Calu3 (cell line): ENCODE measurements at regions of chr6 and their contacts with region 1.

Region 1: GRCh38 chr6:75208298-75209183 is 2.7 kb upstream of the COL12A1 start:
- DNase-seq: peak; percentile 85
- H3K4me3 Mint-ChIP-seq: peak overlapping the region; percentile 14
- H3K27ac Mint-ChIP-seq: no peak overlapping the region
- H3K4me1 Mint-ChIP-seq: peaks cover 37% of the 10 kb centered on the region
- H3K27me3 Mint-ChIP-seq: peaks cover 32% of the 10 kb centered on the region
- CTCF ChIP-seq: peak; percentile 78

Region 2: DNA sequence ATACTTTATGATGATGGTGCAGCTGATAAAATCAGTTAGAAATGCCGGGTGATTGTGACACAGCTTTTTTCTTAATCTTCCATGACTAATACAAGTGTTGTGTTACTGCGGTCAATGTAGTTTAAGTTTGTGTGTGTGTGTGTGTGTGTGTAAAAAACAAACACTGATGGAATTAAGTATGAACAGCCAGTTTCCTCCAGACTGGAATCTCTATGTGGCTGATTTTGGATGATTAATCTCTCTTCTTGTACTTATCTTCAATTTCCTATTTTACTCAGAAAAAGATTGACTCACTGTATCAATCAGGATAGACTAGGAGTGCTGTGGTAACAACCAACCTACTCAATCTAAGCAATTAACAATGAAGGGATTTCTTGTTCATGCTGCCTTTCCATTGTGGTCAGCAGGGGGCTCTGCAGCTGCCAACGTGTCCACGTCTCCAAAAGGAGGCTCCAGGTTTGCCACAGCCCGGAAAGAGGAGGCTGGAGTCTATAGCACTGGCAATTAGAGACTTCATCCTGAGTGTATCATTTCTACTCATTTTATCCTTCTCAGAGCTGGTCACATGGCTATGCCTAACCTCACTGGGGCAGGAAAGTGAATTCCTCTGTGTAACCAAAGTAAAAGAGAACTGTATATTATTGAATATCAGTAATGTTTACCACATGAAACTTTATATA is 1404.8 kb before region 1 on chr6:
- CTCF ChIA-PET with region 1: interaction called, 3 read pairs
- intact Hi-C with region 1: loop called (anchors 5 kb)
- DNase-seq: peak; percentile 67
- H3K4me3 Mint-ChIP-seq: no peak overlapping the region
- H3K27ac Mint-ChIP-seq: peak overlapping the region; percentile 44
- H3K4me1 Mint-ChIP-seq: peaks cover 14% of the 10 kb centered on the region
- H3K27me3 Mint-ChIP-seq: no peaks in the 10 kb centered on the region
- CTCF ChIP-seq: peak; percentile 56

Region 3: DNA sequence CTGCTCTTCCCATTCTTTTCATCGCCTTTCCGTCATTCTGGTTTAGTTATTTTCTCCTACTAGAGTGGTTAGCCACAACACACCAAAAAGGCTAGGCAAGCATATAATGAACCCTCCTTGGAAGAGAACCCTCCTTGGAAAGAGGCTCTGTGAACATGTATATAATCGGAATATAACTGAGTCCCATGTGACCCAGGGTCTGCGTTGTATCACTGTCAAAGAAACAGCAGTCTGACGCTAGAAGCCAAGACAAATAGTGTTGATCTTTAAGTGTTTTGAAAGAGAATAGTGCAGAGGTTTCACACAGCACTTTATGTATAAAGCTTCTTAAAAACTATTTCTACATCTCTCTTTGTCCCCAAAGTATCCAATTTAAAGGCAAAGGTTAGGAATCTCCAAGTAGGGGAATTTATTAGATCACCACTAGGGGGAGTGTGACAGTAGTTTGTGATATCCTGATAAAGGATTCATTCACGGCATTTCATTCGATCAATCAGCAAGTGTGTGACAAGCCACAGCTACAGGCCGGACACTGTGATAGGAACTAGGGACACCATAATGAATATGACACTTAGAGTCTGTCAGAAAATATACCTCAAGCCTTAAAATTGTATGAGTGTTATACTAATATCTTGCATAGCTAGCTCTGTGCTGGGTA is 1117.3 kb before region 1 on chr6:
- CTCF ChIA-PET with region 1: interaction called, 4 read pairs
- intact Hi-C with region 1: loop called (anchors 1 kb)
- DNase-seq: peak; percentile 25
- H3K4me3 Mint-ChIP-seq: no peak overlapping the region
- H3K27ac Mint-ChIP-seq: no peak overlapping the region
- H3K4me1 Mint-ChIP-seq: peaks cover 9% of the 10 kb centered on the region
- H3K27me3 Mint-ChIP-seq: no peaks in the 10 kb centered on the region
- CTCF ChIP-seq: peak; percentile 52

Region 4: GRCh38 chr6:74409447-74409846 is 799.1 kb before region 1 on chr6:
- CTCF ChIA-PET with region 1: interaction called, 12 read pairs
- intact Hi-C with region 1: loop called (anchors 1 kb)
- DNase-seq: no peak
- H3K4me3 Mint-ChIP-seq: no peak overlapping the region
- H3K27ac Mint-ChIP-seq: no peak overlapping the region
- H3K4me1 Mint-ChIP-seq: peaks cover 9% of the 10 kb centered on the region
- H3K27me3 Mint-ChIP-seq: no peaks in the 10 kb centered on the region
- CTCF ChIP-seq: peak; percentile 28

Region 5: GRCh38 chr6:74899416-74899815 is 309.1 kb before region 1 on chr6:
- CTCF ChIA-PET with region 1: no interaction called
- intact Hi-C with region 1: loop called (anchors 5 kb)
- DNase-seq: no peak
- H3K4me3 Mint-ChIP-seq: no peak overlapping the region
- H3K27ac Mint-ChIP-seq: no peak overlapping the region
- H3K4me1 Mint-ChIP-seq: no peaks in the 10 kb centered on the region
- H3K27me3 Mint-ChIP-seq: no peaks in the 10 kb centered on the region
- CTCF ChIP-seq: no peak

Region 6: DNA sequence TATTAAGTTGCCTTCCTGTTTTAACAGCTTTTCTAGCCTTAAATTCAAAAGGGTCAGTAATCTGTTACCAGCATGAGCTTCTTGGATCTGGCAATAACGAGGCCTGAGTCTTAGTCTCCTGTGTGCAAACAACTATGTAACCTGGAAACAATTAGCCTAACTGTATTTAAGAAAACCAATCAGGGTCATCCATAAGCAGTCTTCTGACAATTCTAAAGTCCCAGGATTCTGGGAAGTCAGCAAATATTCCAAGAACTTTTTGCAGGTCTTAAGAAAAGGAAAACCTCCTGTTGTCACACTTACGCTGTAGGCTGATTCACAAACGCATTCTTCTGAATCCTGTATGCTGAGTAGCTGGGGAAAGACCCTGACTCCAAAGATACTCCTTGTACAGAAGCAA is 93.1 kb before region 1 on chr6:
- CTCF ChIA-PET with region 1: interaction called, 3 read pairs
- intact Hi-C with region 1: loop called (anchors 5 kb)
- DNase-seq: no peak
- H3K4me3 Mint-ChIP-seq: peak overlapping the region; percentile 46
- H3K27ac Mint-ChIP-seq: peak overlapping the region; percentile 77
- H3K4me1 Mint-ChIP-seq: peaks cover 48% of the 10 kb centered on the region
- H3K27me3 Mint-ChIP-seq: no peaks in the 10 kb centered on the region
- CTCF ChIP-seq: no peak